ENCODE measurements at regions of chr3 and their contacts with region 1.

Region 1: GRCh38 chr3:170689893-170690660 is 104.2 kb upstream of the SLC7A14 start:
- DNase-seq: no peak
- H3K4me3 ChIP-seq: no peak overlapping the region
- H3K27ac ChIP-seq: no peak overlapping the region
- H3K4me1 ChIP-seq: peaks cover 10% of the 10 kb centered on the region
- H3K27me3 ChIP-seq: no peaks in the 10 kb centered on the region
- CTCF ChIP-seq: peak in 1 of 3 experiments; percentile 36
- POLR2A ChIP-seq: no peak

Region 2: DNA sequence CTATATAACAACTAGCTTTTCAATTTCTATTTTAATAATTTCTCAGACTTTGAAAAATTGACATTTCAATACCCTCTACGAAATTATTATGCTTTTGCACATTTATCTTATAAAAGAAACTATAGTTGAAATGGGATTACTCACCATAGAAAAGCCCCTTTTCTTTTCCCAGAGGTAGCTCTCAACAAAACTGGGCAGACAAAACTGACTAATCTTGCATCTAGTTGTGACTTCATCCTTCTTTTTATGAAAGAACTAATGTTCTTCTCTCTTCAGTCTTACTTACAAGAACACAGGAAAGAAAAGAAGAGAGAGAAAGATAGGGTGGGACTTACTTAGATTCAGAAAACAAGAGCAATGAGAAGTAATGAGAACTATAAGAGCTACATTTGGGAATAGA is 591.3 kb before region 1 on chr3:
- intact Hi-C with region 1: loop called (anchors 5 kb)
- DNase-seq: no peak
- H3K4me3 ChIP-seq: no peak overlapping the region
- H3K27ac ChIP-seq: no peak overlapping the region
- H3K4me1 ChIP-seq: no peaks in the 10 kb centered on the region
- H3K27me3 ChIP-seq: no peaks in the 10 kb centered on the region
- CTCF ChIP-seq: no peak
- POLR2A ChIP-seq: no peak